Transverse colon (tissue), 4 donors: ENCODE measurements at regions of chr5 and their contacts with region 1.

Region 1: DNA sequence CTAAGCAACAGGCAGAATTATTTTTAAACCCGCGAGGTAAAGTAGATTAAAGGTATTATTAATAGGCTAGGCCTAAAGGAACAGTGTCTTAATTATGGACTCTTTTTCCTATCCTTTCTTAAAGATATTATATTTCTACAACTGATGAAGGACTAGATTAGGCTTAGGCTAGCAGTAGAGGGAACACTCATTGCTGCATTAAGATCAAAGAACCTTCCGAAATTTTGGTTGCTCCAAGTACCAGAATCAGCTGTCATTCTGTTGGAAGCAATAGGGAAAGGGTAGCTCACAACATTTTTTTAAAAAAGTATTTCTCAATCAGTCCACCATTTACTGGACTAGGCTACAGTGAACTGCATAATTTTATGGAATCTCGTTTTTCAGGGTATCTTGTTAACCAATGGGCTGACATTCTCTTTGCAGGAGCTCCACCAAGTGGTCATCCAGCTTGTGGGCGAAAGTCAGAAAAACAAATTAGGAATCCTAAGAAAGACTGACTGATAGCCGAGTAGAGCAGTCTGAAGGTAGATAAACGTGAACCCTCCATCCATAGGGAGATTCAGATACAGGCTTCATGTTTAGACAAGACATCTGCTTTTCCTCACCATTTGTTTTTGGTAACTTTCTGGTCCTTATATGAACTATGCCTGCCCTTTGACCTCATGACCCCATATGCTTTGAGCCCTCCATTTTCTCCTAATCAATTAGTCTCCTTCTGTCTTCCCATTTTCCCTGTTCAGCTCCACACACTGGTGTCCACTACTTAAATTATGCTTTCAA is 103.6 kb upstream of the CHD1 start:
- DNase-seq: peak; percentile 72
- H3K4me3 ChIP-seq: peak overlapping the region in 2 of 4 donors; percentile 14 to 44
- H3K27ac ChIP-seq: peak overlapping the region; percentile 63 to 78 (median 72)
- H3K4me1 ChIP-seq: peaks cover 0 to 45% (median 24%) of the 10 kb centered on the region in 4 donors
- H3K27me3 ChIP-seq: no peaks in the 10 kb centered on the region
- CTCF ChIP-seq: peak; percentile 63 to 74 (median 70)
- EP300 ChIP-seq: no peak
- POLR2A ChIP-seq: no peak

Region 2: DNA sequence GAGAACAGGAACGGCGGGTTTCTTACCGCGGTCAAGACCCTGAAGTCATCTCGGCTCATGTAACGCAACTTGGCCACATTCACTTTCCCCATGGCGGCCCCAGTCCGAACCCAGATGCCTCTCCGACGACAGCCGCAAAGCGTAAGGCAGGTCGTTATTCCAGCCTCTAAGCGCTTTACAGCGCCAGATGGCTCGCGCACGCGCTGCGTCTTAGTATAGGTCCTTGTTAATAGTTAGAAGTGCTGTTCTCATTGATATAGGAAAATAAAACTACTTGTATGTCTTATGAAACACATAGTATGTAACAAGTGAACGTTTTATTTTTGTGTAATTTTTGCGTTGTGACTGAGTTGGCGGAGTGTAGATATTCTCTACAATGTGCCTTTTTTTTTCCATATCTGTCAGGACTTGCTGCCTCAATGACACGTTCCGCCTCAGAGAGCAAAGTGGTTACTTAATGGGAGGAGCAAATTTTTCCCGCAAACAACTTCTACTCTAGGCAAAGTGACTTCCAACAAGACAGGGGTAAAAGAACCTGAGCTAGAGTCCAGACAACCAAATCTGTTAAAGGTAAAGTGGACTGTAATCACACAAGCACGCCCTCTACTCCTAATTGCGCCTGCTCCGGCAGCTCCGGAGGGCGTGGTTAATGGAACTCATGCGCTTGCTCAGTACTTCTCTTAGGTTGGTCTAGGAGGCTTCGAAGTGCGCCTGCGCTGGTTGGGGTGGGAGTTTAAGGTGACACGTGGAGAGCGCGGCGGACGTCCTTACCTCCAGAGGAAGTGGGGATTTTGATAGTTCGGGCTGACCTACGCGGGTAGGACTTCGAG is 1849.1 kb before region 1 on chr5 and contains the start of gene RIOK2:
- in situ Hi-C with region 1: loop called in 1 of 4 experiments (anchors 25 kb)
- intact Hi-C with region 1: no loop called
- DNase-seq: peak; percentile 96
- H3K4me3 ChIP-seq: peak within 1 kb of the TSS; percentile 67 to 83 (median 74)
- H3K27ac ChIP-seq: peak within 1 kb of the TSS; percentile 89 to 93 (median 92)
- H3K4me1 ChIP-seq: peaks cover 14 to 31% (median 17%) of the 10 kb centered on the region in 4 donors
- H3K27me3 ChIP-seq: no peaks in the 10 kb centered on the region
- CTCF ChIP-seq: peak in 1 of 5 experiments; percentile 11
- EP300 ChIP-seq: no peak
- POLR2A ChIP-seq: peak; percentile 48
- total RNA-seq, gene RIOK2: 19.3 to 119 (median 23.4) TPM

Region 3: DNA sequence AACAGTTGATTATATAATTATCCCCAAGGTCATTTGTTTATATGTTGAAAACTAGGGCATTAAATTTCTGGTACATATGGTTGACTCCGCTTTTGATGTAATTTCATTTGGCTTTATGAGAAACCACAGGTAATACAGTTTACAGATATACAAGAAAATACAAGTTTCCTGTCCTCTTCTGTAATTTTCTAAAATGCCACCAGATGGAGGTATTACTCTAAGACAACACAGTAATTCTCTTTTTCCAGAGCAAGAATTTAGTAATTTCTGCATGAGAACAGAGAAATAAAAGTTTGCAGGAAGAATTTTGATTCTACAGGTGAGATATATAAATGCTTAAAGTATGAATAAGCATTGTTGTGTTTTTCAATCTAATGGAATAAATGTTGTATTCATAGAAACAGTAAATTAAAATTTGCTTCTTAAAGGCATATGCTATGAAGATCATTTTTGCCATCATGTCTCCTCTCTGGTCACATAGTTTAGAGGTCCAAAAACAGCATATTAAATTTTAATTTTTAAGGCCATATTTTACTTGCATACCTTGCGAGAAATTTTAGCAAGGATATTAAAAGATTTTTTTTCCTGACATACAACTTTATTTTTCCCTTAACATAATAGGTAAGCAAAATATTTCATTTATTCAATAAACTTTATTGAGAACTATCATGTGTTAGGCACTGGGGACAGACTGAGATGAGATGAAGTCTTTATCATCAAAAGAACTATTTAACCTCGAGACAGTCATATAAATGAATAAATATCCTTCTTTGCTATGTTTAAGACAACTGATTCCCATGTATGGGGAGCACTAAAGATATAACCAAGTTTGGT is 126.3 kb before region 1 on chr5:
- in situ Hi-C with region 1: loop called in 3 of 4 experiments (anchors 5 to 10 kb)
- intact Hi-C with region 1: loop called (anchors 5 kb)
- DNase-seq: no peak
- H3K4me3 ChIP-seq: no peak overlapping the region
- H3K27ac ChIP-seq: no peak overlapping the region
- H3K4me1 ChIP-seq: peaks cover 0 to 23% (median 3%) of the 10 kb centered on the region in 4 donors
- H3K27me3 ChIP-seq: no peaks in the 10 kb centered on the region
- CTCF ChIP-seq: peak; percentile 76 to 85 (median 79)
- EP300 ChIP-seq: no peak
- POLR2A ChIP-seq: no peak

Region 4: GRCh38 chr5:98911280-98912040 is 121.0 kb before region 1 on chr5:
- in situ Hi-C with region 1: loop called in 3 of 4 experiments (anchors 5 to 10 kb)
- intact Hi-C with region 1: loop called (anchors 5 kb)
- DNase-seq: no peak
- H3K4me3 ChIP-seq: no peak overlapping the region
- H3K27ac ChIP-seq: no peak overlapping the region
- H3K4me1 ChIP-seq: peaks cover 0 to 42% (median 6%) of the 10 kb centered on the region in 4 donors
- H3K27me3 ChIP-seq: no peaks in the 10 kb centered on the region
- CTCF ChIP-seq: no peak
- EP300 ChIP-seq: no peak
- POLR2A ChIP-seq: no peak

Region 5: DNA sequence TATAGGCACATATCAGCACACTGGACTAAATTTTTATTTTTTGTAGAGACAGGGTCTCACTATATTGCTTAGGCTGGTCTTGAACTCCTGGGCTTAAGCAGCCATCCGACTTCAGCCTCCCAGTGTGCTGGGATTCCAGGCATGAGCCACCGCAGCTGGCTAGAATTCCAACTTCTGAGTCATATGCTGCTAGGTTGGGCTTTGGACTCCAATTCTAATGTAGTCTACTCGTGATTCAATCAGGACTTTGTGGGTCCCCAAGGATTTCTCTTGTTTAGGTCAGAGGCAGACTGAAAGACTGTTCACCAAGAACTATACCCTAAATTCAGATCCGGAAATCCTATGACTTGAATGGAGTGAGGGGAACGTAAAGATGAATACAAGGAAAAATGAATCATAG is 35.4 kb before region 1 on chr5:
- in situ Hi-C with region 1: no loop called
- intact Hi-C with region 1: no loop called
- DNase-seq: no peak
- H3K4me3 ChIP-seq: no peak overlapping the region
- H3K27ac ChIP-seq: no peak overlapping the region
- H3K4me1 ChIP-seq: no peaks in the 10 kb centered on the region
- H3K27me3 ChIP-seq: no peaks in the 10 kb centered on the region
- CTCF ChIP-seq: no peak
- EP300 ChIP-seq: no peak
- POLR2A ChIP-seq: no peak

Region 6: GRCh38 chr5:99285606-99286005 is 253.2 kb after region 1 on chr5:
- in situ Hi-C with region 1: no loop called
- intact Hi-C with region 1: no loop called
- DNase-seq: no peak
- H3K4me3 ChIP-seq: no peak overlapping the region
- H3K27ac ChIP-seq: no peak overlapping the region
- H3K4me1 ChIP-seq: no peaks in the 10 kb centered on the region
- H3K27me3 ChIP-seq: no peaks in the 10 kb centered on the region
- CTCF ChIP-seq: no peak
- EP300 ChIP-seq: no peak
- POLR2A ChIP-seq: no peak

Region 7: DNA sequence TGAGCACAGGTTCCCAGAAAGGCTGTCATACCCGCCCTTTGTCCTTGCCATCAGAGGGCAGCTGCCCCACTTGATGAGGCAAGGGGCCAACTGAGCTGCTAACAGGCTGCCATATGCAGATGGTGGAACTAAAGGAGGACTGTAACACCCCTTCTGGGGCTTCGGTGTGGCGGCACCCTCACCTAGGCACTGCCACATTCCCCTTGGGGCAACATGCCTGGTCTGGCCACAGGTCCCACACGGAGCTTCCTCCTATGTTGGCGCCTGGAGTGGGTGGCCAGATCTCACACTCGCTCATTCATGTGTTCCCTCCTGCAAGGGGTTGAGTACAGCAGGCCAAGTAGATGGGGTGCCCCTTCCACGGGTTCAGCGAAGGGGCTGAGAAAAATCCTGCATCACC is 673.7 kb after region 1 on chr5:
- in situ Hi-C with region 1: no loop called
- intact Hi-C with region 1: no loop called
- DNase-seq: no peak
- H3K4me3 ChIP-seq: no peak overlapping the region
- H3K27ac ChIP-seq: no peak overlapping the region
- H3K4me1 ChIP-seq: no peaks in the 10 kb centered on the region
- H3K27me3 ChIP-seq: no peaks in the 10 kb centered on the region
- CTCF ChIP-seq: no peak
- EP300 ChIP-seq: no peak
- POLR2A ChIP-seq: no peak